Motor neuron (in vitro differentiated cells): ENCODE measurements at regions of chr5 and their contacts with region 1.

Region 1: GRCh38 chr5:53425598-53426511 is 54.6 kb upstream of the FST start:
- ATAC-seq: peak in 2 of 8 experiments; percentile 40 to 64
- H3K4me3 ChIP-seq: no peak overlapping the region
- H3K27ac ChIP-seq: no peak overlapping the region
- H3K4me1 ChIP-seq: peaks cover 5 to 14% of the 10 kb centered on the region in 2 donors

Region 2: DNA sequence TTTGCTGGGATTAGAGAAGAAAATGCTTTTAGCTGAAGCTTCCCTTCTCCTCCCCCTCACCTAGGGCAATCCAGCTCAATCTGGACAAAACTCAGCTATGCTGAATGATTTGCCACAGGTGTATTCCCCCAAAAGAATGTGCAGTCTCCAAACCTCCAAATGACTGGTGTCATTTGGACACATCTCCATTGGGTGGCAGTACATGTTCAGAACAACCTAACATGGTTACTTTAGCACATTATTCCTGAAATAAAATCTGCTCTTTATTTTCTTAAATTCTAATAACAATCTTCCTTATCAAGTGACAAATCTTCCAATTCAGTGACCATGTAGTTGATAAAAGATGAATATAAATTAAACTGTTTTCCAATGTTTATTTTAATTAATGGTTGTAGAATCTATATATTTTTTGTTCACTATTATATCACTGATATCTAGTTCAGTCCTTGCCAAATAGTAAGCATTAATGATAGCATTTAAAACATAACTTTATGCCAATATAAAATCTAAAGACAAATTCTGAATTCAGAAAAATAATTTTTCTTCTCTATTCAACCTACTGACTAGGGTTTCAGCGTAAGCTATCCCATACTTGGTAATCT is 255.0 kb before region 1 on chr5:
- in situ Hi-C with region 1: loop called in 3 of 9 experiments (anchors 25 kb)
- ATAC-seq: peak in 3 of 8 experiments; percentile 44 to 55 (median 49)
- H3K4me3 ChIP-seq: no peak overlapping the region
- H3K27ac ChIP-seq: no peak overlapping the region
- H3K4me1 ChIP-seq: no peaks in the 10 kb centered on the region

Region 3: GRCh38 chr5:53262348-53262970 is 163.4 kb before region 1 on chr5:
- in situ Hi-C with region 1: loop called in 1 of 9 experiments (anchors 10 kb)
- ATAC-seq: peak in 2 of 8 experiments; percentile 35 to 57
- H3K4me3 ChIP-seq: no peak overlapping the region
- H3K27ac ChIP-seq: no peak overlapping the region
- H3K4me1 ChIP-seq: no peaks in the 10 kb centered on the region